ENCODE measurements at regions of chr14 and their contacts with region 1.

Region 1: DNA sequence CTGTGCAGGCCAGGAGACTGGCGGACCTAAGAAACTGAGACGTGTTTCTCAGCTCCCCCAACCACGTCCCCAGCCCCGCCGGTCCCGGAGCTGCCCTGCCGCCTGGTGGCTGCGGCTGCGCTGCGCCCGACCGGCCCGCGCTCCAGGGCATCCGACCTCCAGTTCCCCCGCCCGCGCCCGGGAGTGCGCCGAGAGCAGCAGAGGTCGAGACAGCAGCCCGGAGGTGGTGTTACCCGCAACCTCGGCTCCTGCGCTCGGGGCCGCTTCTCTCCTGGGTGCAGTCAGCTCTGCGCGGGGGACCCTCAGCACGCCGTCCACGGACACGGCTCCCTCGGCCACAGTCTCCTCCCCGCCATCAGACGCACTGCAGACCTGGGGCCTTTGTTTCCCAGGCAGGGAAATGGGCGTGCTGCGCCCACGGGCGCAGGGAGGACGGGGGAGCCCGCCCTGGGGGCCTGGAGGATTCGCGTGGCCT is 21.6 kb upstream of the GPR132 start:
- DNase-seq: peak; percentile 84
- H3K4me3 Mint-ChIP-seq: peak overlapping the region; percentile 64
- H3K27ac Mint-ChIP-seq: no peak overlapping the region
- H3K4me1 Mint-ChIP-seq: peaks cover 18% of the 10 kb centered on the region
- H3K27me3 Mint-ChIP-seq: peaks cover 15% of the 10 kb centered on the region

Region 2: DNA sequence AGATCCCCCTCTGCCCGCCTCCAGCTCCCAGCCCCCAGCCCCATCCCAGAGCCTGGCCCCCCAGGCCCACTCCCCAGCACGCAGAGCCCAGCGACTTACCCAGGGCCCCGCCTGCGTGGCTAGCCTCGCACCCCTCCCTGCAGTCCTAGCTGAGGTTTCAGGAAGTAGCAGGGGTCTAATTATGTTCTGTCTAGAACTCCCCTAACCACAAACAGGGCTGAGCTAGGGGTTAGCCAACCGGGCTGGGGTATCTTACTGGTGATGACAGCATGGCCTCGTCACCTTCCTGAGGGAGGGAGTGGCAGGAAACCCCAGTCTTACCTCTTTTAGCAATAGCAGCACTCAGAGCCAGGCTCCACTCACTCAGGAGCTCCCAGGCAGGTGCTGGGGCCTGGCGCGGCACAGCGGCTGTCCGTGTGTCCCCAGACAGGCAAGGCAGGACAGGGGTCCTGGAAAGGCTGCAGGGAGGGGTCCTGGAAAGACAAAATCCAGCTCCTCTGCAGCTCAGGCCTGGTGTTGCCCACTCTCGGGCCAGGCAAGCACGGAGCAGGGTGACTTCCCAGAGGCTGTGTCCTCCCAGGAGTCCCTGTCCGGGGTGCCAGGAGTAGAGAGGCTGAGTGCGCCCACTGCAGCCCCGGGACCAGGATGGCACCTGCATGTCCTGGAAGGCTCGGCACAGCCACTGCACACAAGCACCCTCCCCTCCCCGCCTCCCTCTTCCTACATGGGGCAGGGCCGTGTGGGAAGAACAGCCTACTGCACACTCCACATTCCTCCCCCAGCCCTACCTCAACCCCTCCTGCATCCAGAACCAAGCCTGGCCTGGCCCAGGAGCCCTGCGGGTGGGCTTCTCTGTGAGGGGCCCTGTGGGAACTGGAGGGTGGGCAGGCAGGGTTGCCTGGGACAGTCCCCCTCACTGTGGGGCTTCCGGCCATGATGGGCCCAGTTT is 21.3 kb before region 1 on chr14 and contains the start of gene GPR132:
- CTCF ChIA-PET with region 1: interaction called, 50 read pairs
- POLR2A ChIA-PET with region 1: no interaction called
- DNase-seq: peak; percentile 97
- H3K4me3 Mint-ChIP-seq: peak within 1 kb of the TSS; percentile 80
- H3K27ac Mint-ChIP-seq: peak within 1 kb of the TSS; percentile 94
- H3K4me1 Mint-ChIP-seq: peaks cover 73% of the 10 kb centered on the region
- H3K27me3 Mint-ChIP-seq: no peaks in the 10 kb centered on the region
- total RNA-seq, gene GPR132: 44.2 to 46.6 TPM

Region 3: DNA sequence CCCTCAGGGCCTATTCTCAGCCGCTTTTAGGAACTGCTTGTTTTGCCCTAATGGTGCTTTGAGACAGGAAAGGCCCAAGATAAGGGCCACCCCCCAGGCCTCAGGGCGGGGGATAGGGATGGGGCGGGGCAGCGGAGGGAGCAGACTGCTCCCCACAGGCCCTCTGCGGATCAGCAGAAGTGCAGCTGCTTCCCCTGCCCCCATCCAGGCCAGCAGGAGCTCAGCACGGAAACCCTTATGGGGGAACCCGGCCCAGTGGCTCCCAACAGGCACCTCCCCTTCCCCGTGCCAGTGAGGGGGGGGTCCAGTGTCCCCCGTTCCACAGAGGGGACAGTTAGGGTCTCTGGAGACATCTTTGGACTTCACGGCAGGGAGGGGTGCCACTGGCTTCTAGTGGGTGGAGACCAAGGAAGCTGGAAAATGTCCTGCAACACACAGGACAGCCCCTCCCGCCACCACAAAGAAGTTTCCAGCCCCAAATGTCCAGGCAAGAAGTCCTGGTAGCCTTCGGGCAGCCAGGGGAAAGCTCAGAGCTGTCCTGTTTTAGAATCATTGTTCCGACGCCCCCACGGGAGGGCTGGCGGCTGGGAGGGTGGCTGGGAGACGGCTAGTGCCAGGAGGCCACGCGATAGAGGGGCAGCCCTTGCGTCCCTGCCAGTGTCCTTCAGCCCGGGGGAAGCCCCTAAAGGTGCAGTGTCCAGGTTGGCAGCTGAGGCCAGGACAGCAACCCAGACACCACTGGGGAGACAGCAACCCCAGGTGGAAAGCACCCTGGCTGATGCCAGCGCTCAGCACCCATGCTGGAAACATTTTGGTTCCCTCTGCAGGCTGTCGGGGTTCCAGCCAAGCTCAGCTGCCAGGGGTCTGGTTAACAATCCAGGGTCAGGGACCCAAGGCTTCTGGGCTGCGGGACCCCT is 11.2 kb before region 1 on chr14:
- CTCF ChIA-PET with region 1: interaction called, 50 read pairs
- POLR2A ChIA-PET with region 1: no interaction called
- DNase-seq: peak; percentile 33
- H3K4me3 Mint-ChIP-seq: no peak overlapping the region
- H3K27ac Mint-ChIP-seq: peak overlapping the region; percentile 46
- H3K4me1 Mint-ChIP-seq: peaks cover 34% of the 10 kb centered on the region
- H3K27me3 Mint-ChIP-seq: peaks cover 10% of the 10 kb centered on the region

Region 4: DNA sequence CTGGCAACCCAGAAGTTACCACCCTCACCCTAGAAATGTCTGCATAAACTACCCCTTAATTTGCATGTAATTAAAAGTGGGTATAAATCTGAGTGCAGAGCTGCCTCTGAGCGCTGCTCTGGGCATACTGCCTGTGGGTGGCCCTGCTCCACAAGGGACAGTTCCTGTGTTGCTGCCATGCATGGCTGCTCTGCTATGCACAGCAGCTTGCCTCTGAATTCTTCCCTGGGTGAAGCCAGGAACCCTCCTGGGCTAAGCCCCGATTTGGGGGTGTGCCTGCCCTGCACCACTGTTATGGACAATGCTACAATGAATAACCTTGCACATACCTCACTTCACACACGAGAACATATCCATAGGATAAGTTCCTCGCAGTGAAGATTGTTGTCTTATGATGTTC is 14.1 kb after region 1 on chr14:
- CTCF ChIA-PET with region 1: no interaction called
- POLR2A ChIA-PET with region 1: no interaction called
- DNase-seq: no peak
- H3K4me3 Mint-ChIP-seq: no peak overlapping the region
- H3K27ac Mint-ChIP-seq: no peak overlapping the region
- H3K4me1 Mint-ChIP-seq: peaks cover 5% of the 10 kb centered on the region
- H3K27me3 Mint-ChIP-seq: peaks cover 30% of the 10 kb centered on the region

Region 5: GRCh38 chr14:105144666-105145380 is 58.0 kb after region 1 on chr14:
- CTCF ChIA-PET with region 1: no interaction called
- POLR2A ChIA-PET with region 1: no interaction called
- DNase-seq: no peak
- H3K4me3 Mint-ChIP-seq: no peak overlapping the region
- H3K27ac Mint-ChIP-seq: no peak overlapping the region
- H3K4me1 Mint-ChIP-seq: no peaks in the 10 kb centered on the region
- H3K27me3 Mint-ChIP-seq: no peaks in the 10 kb centered on the region

Region 6: DNA sequence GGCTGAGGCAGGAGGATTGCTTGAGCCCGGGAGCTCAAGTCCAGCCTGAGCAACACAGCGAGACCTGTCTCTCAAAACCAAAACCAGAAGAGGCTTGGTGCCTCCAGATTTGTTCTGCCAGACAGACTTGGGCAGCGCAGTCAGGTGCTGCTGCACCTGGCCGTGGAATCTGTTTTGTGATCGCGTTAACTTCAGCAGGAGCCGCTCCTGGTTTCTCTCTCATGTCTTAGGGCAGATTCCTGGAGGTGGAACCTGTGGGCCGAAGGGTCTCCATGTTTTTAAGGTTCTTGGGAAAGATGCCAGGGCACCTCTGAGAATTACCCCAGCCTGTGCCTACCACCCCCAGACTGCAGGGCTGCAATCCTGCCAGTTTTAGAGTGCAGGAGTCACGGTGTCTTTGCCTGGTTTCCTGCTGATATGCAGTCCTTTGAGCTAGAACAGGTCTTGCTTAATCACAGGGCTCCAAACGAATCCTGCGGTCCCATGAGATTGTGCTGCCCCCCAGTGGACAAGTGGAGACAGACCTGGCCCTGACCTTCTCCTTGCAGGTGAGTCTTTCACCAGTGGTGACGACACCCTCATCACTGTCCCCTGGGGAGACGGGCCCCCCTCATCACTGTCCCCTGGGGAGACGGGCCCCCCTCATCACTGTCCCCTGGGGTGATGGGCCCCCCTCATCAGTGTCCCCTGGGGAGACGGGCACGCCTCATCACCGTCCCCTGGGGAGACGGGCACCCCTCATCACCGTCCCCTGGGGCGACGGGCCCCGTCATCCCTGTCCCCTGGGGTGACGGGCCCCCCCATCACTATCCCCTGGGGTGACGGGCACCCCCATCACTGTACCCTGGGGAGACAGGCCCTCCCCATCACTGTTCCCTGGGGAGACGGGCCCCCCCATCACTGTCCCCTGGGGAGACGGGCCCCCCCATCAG is 265.3 kb after region 1 on chr14:
- CTCF ChIA-PET with region 1: interaction called, 12 read pairs
- POLR2A ChIA-PET with region 1: no interaction called
- DNase-seq: peak; percentile 94
- H3K4me3 Mint-ChIP-seq: no peak overlapping the region
- H3K27ac Mint-ChIP-seq: peak overlapping the region; percentile 66
- H3K4me1 Mint-ChIP-seq: peaks cover 3% of the 10 kb centered on the region
- H3K27me3 Mint-ChIP-seq: no peaks in the 10 kb centered on the region